ENCODE measurements at regions of chr22 and their contacts with region 1.

Region 1: GRCh38 chr22:19178656-19179496 is at the start of gene SLC25A1:
- DNase-seq: peak; percentile 50 to 70 (median 61)
- H3K4me3 ChIP-seq: peak within 1 kb of the TSS in 1 of 2 donors; percentile 66
- H3K4me3 Mint-ChIP-seq: peak within 1 kb of the TSS; percentile 82 to 92 (median 90)
- H3K27ac ChIP-seq: peak within 1 kb of the TSS; percentile 62
- H3K27ac Mint-ChIP-seq: peak within 1 kb of the TSS; percentile 83 to 93 (median 86)
- H3K4me1 ChIP-seq: peaks cover 23% of the 10 kb centered on the region
- H3K4me1 Mint-ChIP-seq: peaks cover 4 to 32% (median 15%) of the 10 kb centered on the region in 4 donors
- H3K27me3 ChIP-seq: no peaks in the 10 kb centered on the region
- H3K27me3 Mint-ChIP-seq: no peaks in the 10 kb centered on the region
- total RNA-seq, gene SLC25A1: 39.0 to 40.7 TPM

Region 2: DNA sequence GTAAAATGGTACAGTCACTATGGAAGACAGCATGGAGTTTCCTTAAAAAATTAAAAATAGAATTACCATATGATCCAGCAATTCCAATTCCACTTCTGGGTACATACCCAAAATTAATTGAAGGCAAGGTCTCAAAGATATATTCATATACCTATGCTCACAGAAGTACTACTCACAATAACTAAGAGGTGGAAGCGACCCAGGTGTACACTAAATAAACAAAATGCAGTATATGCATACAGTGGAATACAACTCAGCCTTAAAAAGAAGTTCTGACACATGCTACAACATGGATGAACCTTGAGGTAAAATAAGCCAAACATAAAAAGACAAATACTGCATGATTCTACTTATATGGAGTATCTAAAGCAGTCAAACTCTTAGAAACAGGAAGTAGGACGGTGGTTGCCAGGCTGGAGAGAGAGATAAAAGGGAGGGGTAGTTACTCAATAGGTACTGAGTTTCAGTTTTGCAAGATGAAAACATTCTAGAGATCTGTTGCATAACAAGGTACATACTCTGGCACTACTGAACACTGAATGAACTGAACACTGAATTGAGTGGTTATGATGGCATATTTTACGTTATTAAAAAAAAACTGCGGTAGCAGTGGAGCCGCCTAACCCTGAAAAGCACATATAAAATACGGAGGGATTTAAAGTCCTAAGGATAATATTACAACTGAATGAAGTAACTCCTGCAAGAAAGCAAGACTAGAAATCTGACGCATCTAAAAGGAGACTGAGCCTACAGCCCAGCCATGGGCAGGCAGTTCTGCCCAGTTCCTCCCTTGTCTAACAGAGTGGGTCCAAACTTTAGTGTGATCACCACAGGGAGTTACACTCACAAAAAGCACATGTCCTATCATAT is 69.4 kb before region 1 on chr22:
- CTCF ChIA-PET with region 1: interaction called, 10 read pairs
- POLR2A ChIA-PET with region 1: no interaction called
- intact Hi-C with region 1: loop called (anchors 2 kb)
- DNase-seq: peak; percentile 75 to 86 (median 82)
- H3K4me3 ChIP-seq: peak overlapping the region; percentile 26 to 29
- H3K4me3 Mint-ChIP-seq: peak overlapping the region; percentile 77 to 89 (median 84)
- H3K27ac ChIP-seq: peak overlapping the region; percentile 80
- H3K27ac Mint-ChIP-seq: peak overlapping the region; percentile 79 to 99 (median 97)
- H3K4me1 ChIP-seq: peaks cover 66% of the 10 kb centered on the region
- H3K4me1 Mint-ChIP-seq: peaks cover 51 to 76% (median 62%) of the 10 kb centered on the region in 4 donors
- H3K27me3 ChIP-seq: no peaks in the 10 kb centered on the region
- H3K27me3 Mint-ChIP-seq: no peaks in the 10 kb centered on the region

Region 3: GRCh38 chr22:19291580-19292457 is 112.9 kb after region 1 on chr22 and contains the start of gene CLTCL1:
- CTCF ChIA-PET with region 1: interaction called, 5 read pairs
- POLR2A ChIA-PET with region 1: interaction called, 6 read pairs
- intact Hi-C with region 1: loop called (anchors 2 kb)
- DNase-seq: peak; percentile 49 to 73 (median 62)
- H3K4me3 ChIP-seq: peak within 1 kb of the TSS; percentile 43 to 92
- H3K4me3 Mint-ChIP-seq: peak within 1 kb of the TSS; percentile 87 to 93 (median 91)
- H3K27ac ChIP-seq: peak within 1 kb of the TSS; percentile 58
- H3K27ac Mint-ChIP-seq: peak within 1 kb of the TSS; percentile 42 to 92 (median 88)
- H3K4me1 ChIP-seq: peaks cover 25% of the 10 kb centered on the region
- H3K4me1 Mint-ChIP-seq: peaks cover 12 to 31% (median 21%) of the 10 kb centered on the region in 4 donors
- H3K27me3 ChIP-seq: no peaks in the 10 kb centered on the region
- H3K27me3 Mint-ChIP-seq: peaks cover 7 to 17% of the 10 kb centered on the region in 2 donors
- total RNA-seq, gene CLTCL1: 0.80 to 1.7 TPM

Region 4: DNA sequence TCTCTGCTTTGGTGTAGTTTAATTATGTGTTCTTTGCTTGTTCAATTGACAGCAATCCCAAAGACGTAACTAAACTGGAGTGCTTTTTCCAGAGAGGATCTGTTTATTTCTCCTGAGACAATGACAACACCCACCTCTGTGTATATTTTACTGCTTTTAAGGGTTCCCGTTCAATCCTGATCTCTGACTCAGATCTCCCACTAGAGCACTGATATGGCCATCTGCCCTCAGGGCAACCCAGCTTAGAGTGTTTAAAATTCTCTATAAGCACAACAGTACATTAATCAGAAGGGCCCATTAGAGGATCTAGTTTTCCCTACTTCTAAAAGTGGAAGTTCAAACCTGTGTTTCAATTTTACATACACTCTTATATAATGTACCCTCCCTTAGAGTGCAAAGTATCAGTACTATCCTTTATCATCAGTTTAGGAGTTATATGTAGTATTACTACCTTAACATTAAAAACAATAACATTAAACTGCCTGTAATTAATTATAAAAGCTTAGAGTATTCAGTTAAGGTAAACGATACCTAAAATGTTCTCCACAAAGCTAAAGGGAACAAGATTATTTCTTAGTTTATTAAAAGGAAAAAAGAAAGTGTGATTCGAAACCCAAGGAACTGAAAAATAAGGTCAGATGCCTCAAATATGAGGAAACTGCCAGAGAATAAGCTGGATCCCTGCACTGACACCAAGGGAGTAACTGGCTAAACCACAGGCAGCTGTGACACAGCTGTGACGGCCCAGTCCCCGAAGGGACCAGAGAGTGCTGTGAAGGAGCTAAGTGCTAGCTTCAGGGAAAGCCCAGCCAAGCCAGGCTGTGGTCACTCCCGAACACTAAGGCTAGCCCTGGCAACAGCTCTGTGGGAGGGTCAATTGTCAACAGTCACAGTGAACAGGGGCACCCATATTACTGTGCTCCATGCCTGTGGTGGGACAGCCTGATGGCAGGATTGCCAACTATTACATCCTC is 284.9 kb after region 1 on chr22:
- CTCF ChIA-PET with region 1: no interaction called
- POLR2A ChIA-PET with region 1: no interaction called
- intact Hi-C with region 1: no loop called
- DNase-seq: no peak
- H3K4me3 ChIP-seq: no peak overlapping the region
- H3K4me3 Mint-ChIP-seq: no peak overlapping the region
- H3K27ac ChIP-seq: no peak overlapping the region
- H3K27ac Mint-ChIP-seq: peak overlapping the region in 2 of 7 donors; percentile 29 to 38
- H3K4me1 ChIP-seq: peaks cover 11% of the 10 kb centered on the region
- H3K4me1 Mint-ChIP-seq: peaks cover 0 to 13% (median 4%) of the 10 kb centered on the region in 4 donors
- H3K27me3 ChIP-seq: no peaks in the 10 kb centered on the region
- H3K27me3 Mint-ChIP-seq: no peaks in the 10 kb centered on the region

Region 5: DNA sequence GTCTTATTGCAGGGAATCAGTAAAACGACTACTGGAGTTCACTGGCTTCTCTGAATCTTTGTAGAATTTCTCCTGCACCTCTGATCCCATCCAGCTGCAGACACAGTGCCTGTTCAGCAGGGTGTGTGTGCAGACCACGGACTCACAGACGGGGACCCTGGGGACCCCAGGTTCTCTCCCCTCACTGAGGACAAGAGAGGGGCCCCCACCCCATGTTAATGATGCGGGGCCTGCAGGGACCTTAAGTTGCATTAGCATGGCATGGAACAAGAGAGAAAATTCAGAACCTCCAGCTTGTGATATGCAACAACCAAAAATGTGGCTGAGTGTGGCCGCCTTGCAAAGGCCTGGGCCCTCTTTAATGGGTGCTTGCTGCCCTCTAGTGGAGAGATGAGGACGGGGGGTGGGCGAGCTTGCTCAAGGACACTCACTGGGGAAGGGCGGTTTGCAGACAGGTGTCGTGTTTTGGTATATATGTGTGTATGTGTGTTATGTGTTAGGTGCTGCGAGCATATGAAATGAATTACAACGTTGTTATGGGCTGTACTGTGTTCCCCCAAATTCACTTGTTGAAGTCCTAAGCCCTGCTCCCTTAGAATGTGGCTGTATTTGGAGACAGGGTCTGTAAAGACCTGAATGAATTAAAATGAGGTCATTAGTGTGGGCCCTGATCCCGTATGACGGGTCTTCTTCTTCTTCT is 451.0 kb after region 1 on chr22:
- CTCF ChIA-PET with region 1: interaction called, 8 read pairs
- POLR2A ChIA-PET with region 1: interaction called, 8 read pairs
- intact Hi-C with region 1: loop called (anchors 1 kb)
- DNase-seq: peak; percentile 80 to 84 (median 81)
- H3K4me3 ChIP-seq: no peak overlapping the region
- H3K4me3 Mint-ChIP-seq: no peak overlapping the region
- H3K27ac ChIP-seq: no peak overlapping the region
- H3K27ac Mint-ChIP-seq: peak overlapping the region in 2 of 7 donors; percentile 29 to 67
- H3K4me1 ChIP-seq: no peaks in the 10 kb centered on the region
- H3K4me1 Mint-ChIP-seq: peaks cover 0 to 3% (median 1%) of the 10 kb centered on the region in 4 donors
- H3K27me3 ChIP-seq: no peaks in the 10 kb centered on the region
- H3K27me3 Mint-ChIP-seq: peaks cover 2% of the 10 kb centered on the region in 2 donors

Region 6: GRCh38 chr22:20116951-20117645 is 938.2 kb after region 1 on chr22 and contains the start of gene TRMT2A:
- CTCF ChIA-PET with region 1: no interaction called
- POLR2A ChIA-PET with region 1: no interaction called
- intact Hi-C with region 1: loop called (anchors 2 kb)
- DNase-seq: peak; percentile 96 to 98 (median 97)
- H3K4me3 ChIP-seq: peak within 1 kb of the TSS; percentile 81 to 82
- H3K4me3 Mint-ChIP-seq: peak within 1 kb of the TSS; percentile 85 to 93 (median 92)
- H3K27ac ChIP-seq: peak within 1 kb of the TSS; percentile 85
- H3K27ac Mint-ChIP-seq: peak within 1 kb of the TSS; percentile 93 to 96 (median 95)
- H3K4me1 ChIP-seq: peaks cover 49% of the 10 kb centered on the region
- H3K4me1 Mint-ChIP-seq: peaks cover 14 to 53% (median 31%) of the 10 kb centered on the region in 4 donors
- H3K27me3 ChIP-seq: no peaks in the 10 kb centered on the region
- H3K27me3 Mint-ChIP-seq: no peaks in the 10 kb centered on the region
- total RNA-seq, gene TRMT2A: 110 to 126 TPM